Ovary (tissue), 10 donors: ENCODE measurements at regions of chr16 and their contacts with region 1.

Region 1: GRCh38 chr16:70685938-70686375 is at the start of gene MTSS2:
- DNase-seq: peak; percentile 91 to 94 (median 92)
- H3K4me3 ChIP-seq: peak within 1 kb of the TSS; percentile 83
- H3K27ac ChIP-seq: peak within 1 kb of the TSS; percentile 75 to 79
- H3K4me1 ChIP-seq: peaks cover 57% of the 10 kb centered on the region
- H3K27me3 ChIP-seq: no peaks in the 10 kb centered on the region
- CTCF ChIP-seq: peak in 1 of 3 donors; percentile 17
- EP300 ChIP-seq: no peak
- POLR2A ChIP-seq: peak; percentile 3
- total RNA-seq, gene MTSS2: 19.6 to 93.5 (median 40.2) TPM

Region 2: GRCh38 chr16:70416748-70417616 is 269.0 kb before region 1 on chr16:
- intact Hi-C with region 1: no loop called
- DNase-seq: no peak
- H3K4me3 ChIP-seq: no peak overlapping the region
- H3K27ac ChIP-seq: no peak overlapping the region
- H3K4me1 ChIP-seq: peaks cover 4% of the 10 kb centered on the region
- H3K27me3 ChIP-seq: no peaks in the 10 kb centered on the region
- CTCF ChIP-seq: no peak
- EP300 ChIP-seq: no peak
- POLR2A ChIP-seq: no peak

Region 3: DNA sequence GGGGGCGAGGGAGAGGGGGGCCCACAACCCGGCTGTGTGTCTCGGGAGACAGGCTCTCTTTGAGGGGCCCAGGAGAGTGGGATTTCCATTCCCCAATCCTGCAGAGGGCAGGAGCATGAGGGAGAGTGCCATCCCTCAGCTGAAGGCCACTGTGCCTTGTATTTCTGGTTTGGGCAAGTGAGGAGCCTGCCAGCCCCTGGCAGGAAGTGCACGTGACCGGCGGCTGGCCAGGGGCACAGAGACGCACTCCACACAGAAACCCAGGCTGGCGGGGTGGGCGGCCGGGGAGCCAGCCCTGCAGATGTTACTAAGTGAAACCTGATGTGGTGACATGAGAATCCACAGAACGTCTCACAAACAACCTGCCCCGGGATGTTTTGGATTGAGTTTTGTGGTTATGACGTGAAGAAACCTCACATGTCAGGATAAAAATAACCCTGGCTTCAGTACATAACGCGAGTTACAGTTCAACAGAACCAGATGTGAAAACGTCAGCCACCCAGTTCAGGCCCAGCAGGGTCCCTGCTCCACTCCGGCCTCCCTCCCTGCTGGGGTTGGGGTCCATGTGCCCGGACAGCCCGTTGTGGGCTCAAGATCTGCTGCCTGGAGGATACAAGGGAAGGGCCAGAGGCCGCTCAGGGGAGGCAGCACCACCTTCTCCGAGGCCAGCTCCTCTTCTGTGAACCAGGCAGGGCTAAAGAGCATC is 51.6 kb after region 1 on chr16:
- intact Hi-C with region 1: loop called in 1 of 4 experiments (anchors 2 kb)
- DNase-seq: peak in 4 of 5 donors; percentile 54 to 71 (median 66)
- H3K4me3 ChIP-seq: no peak overlapping the region
- H3K27ac ChIP-seq: peak overlapping the region; percentile 45 to 87
- H3K4me1 ChIP-seq: peaks cover 4% of the 10 kb centered on the region
- H3K27me3 ChIP-seq: no peaks in the 10 kb centered on the region
- CTCF ChIP-seq: no peak
- EP300 ChIP-seq: no peak
- POLR2A ChIP-seq: no peak

Region 4: GRCh38 chr16:70750893-70751475 is 65.0 kb after region 1 on chr16:
- intact Hi-C with region 1: loop called in 1 of 4 experiments (anchors 2 kb)
- DNase-seq: peak; percentile 73 to 87 (median 81)
- H3K4me3 ChIP-seq: no peak overlapping the region
- H3K27ac ChIP-seq: peak overlapping the region; percentile 58 to 63
- H3K4me1 ChIP-seq: peaks cover 27% of the 10 kb centered on the region
- H3K27me3 ChIP-seq: no peaks in the 10 kb centered on the region
- CTCF ChIP-seq: no peak
- EP300 ChIP-seq: no peak
- POLR2A ChIP-seq: no peak

Region 5: DNA sequence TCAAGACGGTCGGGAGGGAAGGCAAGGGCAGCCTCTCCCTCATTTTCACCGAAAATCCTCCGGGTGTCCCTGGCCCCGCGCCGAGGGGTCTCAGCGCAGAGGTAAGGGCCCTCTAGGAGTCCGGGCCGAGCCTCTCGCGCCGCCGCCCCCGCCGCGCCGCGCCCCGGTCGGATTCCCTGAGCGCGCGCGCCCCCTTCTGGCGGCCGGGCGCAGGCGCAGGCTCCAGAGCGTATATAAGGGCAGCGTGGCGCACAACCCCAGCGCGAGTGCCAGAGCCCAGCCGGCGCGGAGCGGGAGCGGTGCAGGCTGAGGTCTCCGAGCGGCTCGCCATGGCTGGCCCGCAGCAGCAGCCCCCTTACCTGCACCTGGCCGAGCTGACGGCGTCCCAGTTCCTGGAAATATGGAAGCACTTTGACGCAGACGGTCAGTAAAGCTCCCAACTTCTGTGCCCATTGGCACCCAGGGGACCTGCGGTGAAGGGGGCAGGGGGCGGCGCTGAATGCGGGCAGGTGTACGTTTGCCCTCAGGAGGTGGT is 672.6 kb after region 1 on chr16 and contains the start of gene CALB2:
- intact Hi-C with region 1: loop called in 1 of 4 experiments (anchors 10 kb)
- DNase-seq: peak; percentile 41 to 80 (median 65)
- H3K4me3 ChIP-seq: peak within 1 kb of the TSS; percentile 10
- H3K27ac ChIP-seq: no peak within 1 kb of the TSS
- H3K4me1 ChIP-seq: peaks cover 3% of the 10 kb centered on the region
- H3K27me3 ChIP-seq: no peaks in the 10 kb centered on the region
- CTCF ChIP-seq: peak; percentile 66 to 82 (median 72)
- EP300 ChIP-seq: no peak
- POLR2A ChIP-seq: no peak
- total RNA-seq, gene CALB2: 1.7 to 176 (median 2.5) TPM